Right ventricle myocardium inferior (tissue), 1 donor: ENCODE measurements at regions of chr5 and their contacts with region 1.

Region 1: DNA sequence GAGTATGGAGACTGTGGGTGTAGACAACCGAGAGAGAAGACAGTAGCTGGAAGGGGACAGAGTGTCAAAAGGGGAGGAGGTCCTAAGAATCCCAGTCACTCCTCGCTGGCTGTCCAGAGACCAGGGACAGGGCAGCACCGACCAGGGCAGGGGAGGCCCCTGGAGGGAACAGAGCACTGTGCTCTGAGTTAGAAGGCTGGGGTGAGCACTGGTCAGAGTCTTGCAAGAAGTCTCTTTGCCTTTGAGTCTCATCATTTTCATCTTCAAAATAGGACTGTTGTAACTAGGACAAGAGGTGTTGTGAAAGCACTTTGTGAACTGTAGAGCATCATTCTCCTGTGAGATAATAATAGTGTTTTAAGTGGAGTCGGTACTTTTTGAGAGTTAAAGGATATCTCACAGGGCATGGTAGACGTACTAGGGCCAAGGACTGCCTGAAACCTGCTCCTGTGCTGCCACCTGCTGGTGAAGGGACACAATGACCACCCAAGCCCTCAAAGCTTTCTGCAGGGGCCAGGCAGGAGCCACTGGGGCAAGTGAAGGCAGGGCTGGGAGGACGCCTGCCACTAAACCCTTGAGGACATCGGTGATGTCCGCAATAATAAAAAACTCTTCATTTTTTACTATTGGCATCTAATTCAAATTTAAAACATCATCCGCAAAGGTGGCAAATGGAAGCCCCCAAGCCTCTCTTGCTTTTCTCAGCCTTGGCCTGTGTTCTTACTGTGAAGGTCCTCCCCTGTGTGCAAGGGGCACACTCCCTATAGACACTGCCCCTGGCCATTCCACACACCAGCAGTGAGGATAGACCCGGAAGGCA is 28.2 kb downstream of the SLC6A7 start:
- DNase-seq: peak; percentile 89
- ATAC-seq: peak; percentile 83

Region 2: DNA sequence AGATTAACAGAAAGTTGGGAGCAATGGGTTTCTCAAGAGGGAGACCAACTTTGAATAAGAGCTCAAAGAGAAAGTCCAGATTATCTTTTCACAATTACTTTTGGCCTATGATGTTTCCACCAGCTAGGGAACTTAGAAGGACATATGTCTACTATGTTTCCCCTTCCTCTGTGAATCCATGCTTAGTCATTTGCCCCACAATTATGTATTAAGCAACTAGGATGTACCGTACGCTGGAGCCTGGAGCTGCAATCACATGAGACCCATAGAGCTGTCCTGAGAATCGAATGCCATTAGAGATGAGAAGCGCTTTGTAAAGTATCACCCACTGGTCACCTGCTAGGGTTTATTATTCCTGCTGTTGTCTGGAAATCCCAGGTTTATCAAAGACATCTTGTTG is 352.3 kb before region 1 on chr5:
- intact Hi-C with region 1: no loop called
- DNase-seq: no peak
- ATAC-seq: no peak

Region 3: DNA sequence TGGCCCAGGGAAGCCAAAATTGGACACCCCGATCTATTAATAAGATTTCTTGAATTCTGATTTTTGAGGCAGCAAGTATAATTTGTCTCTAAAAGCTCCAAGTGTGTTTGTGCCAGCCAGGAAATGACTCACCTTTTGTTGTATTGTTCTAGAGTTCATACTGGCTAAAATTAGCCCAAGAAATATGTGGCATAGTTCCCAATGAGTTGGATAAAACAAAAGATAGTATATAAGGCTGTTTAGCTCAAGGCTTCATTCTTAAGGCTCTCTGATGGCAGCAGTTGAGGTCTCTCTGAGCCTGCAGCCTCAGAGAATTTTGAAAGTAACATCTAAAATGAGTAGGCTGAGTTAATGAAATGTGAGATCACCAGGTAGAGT is 195.9 kb before region 1 on chr5:
- intact Hi-C with region 1: loop called (anchors 1 kb)
- DNase-seq: no peak
- ATAC-seq: peak; percentile 56

Region 4: DNA sequence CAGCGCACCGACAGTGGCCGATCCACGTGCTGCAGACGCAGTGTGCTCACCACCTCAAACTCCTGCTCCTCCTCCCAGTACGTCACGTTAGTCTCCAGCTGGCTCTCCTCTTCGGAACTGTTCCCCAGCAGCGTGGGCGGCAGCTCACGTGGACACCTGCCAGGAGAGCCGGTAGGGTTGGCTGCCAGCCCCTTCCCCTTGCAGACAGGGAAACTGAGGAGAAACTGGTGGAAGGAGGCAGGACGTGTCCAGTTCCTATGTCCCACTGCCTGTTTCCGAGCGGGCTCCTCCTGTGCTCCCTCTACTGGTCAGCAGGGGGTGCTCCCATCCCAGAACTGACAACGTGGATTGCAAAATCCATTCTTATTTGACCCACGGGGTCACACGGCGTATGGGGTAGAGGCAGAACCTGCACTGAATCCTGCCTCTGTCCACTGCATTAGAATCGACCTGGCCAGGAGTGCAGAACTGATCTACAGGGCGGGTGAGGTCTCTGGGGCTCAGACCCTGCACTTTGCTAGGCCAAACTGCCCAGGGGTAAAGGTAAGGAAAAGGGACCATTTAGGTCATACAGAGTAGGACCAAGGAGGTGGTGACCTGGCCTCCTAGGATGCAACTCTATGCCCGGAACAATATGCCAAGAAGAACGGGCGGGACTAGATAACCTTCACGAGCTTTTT is 88.1 kb before region 1 on chr5:
- intact Hi-C with region 1: loop called (anchors 1 kb)
- DNase-seq: no peak
- ATAC-seq: peak; percentile 70